Activated B cell treated with CpG ODN at 0.5 μM for 24 hours (primary cell): ENCODE measurements at regions of chr6 and their contacts with region 1.

Region 1: DNA sequence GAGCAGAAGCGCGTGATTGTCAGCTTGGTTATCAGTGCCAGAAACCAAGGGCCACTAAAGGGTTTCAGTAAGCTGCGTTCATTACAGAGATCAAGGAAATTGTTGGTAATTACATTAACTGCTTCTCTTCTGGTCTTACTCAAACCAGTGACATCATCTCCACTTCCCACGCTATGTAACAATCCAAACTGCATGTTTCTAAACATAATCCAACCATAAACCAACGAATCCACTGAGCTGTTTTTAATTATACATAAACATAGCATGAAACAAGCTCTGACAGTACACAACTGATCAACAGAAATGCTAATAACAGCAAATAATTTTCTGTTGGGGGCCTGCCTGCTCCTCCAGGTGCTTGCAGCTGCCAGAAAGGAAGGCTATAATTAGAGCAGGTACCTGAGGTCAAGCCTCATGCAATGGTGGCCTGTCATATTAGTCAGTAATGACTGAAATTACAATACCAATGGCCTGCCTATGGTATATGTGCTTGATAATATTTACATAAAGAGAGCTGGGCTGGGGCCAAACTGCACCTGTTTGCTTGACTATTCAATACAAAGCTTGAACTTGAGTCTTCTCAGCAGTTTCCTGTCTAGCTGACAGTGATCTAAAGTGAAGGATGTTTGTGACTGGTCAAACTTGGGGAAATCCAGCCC is 40.1 kb downstream of the ILRUN start:
- DNase-seq: no peak
- ATAC-seq: peak; percentile 79
- H3K4me3 Mint-ChIP-seq: peak overlapping the region; percentile 74
- H3K27ac Mint-ChIP-seq: peak overlapping the region; percentile 92
- H3K4me1 Mint-ChIP-seq: peaks cover 58% of the 10 kb centered on the region
- H3K27me3 Mint-ChIP-seq: no peaks in the 10 kb centered on the region
- CTCF ChIP-seq: no peak

Region 2: DNA sequence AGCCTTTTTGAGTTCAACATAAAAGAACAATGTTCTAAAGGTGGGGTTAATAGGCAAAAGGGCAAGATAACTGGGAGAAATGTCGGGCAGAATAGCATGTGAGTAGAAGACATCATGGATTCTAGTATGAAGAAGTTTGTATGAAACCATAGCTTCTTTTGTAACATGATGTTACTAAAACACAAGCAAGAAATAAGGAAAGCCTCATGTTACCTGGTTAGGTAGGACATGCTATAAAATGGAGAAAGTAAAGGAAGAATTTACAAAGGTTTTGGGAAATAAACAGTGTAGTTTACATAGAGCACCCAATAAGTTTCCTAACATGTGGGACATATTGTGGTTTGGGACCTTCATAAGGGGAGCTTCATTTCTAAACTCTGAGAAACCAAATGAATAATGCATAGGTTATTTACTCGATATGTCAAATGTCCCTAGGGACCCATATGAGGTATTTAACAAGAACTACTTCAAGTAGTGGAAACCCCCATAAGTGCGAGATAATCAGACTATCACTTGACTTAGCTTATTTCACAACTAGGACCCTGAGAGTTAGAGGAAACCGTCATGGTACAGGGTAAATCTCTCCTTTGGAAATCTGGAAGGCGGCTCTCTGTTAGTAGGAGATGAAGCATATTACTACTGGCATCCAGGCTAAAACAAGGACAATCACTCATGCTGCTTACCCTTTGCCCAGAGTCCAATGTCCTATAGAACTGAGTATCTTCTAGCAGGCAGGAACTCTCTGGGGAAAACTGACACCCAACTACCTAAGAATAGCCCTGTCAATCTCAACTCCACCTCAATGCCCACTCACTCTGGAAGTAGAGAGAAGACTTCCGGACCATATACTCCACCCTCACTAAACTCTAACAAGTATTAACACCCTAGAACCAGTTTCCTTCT is 17.4 kb before region 1 on chr6:
- CTCF ChIA-PET with region 1: no interaction called
- POLR2A ChIA-PET with region 1: interaction called, 21 read pairs
- intact Hi-C with region 1: no loop called
- DNase-seq: no peak
- ATAC-seq: peak; percentile 84
- H3K4me3 Mint-ChIP-seq: peak overlapping the region; percentile 72
- H3K27ac Mint-ChIP-seq: peak overlapping the region; percentile 86
- H3K4me1 Mint-ChIP-seq: peaks cover 38% of the 10 kb centered on the region
- H3K27me3 Mint-ChIP-seq: no peaks in the 10 kb centered on the region
- CTCF ChIP-seq: no peak

Region 3: GRCh38 chr6:34644716-34645115 is 11.8 kb before region 1 on chr6:
- CTCF ChIA-PET with region 1: no interaction called
- POLR2A ChIA-PET with region 1: interaction called, 21 read pairs
- intact Hi-C with region 1: no loop called
- DNase-seq: no peak
- ATAC-seq: no peak
- H3K4me3 Mint-ChIP-seq: no peak overlapping the region
- H3K27ac Mint-ChIP-seq: peak overlapping the region; percentile 0
- H3K4me1 Mint-ChIP-seq: peaks cover 25% of the 10 kb centered on the region
- H3K27me3 Mint-ChIP-seq: no peaks in the 10 kb centered on the region
- CTCF ChIP-seq: no peak